Caco-2 (cell line): ENCODE measurements at regions of chr1 and their contacts with region 1.

Region 1: GRCh38 chr1:246689409-246690008 is 34.7 kb upstream of the SCCPDH start:
- DNase-seq: peak; percentile 60 to 73
- H3K4me3 ChIP-seq: 0 out of 2 replicates have a peak overlapping the region, but pooled peaks have one; percentile 14
- H3K4me3 Mint-ChIP-seq: peak overlapping the region; percentile 14
- H3K27ac Mint-ChIP-seq: no peak overlapping the region
- H3K4me1 ChIP-seq: peaks cover 4% of the 10 kb centered on the region; the same call in 1 of the 2 replicates
- H3K4me1 Mint-ChIP-seq: no peaks in the 10 kb centered on the region
- H3K27me3 ChIP-seq: no peaks in the 10 kb centered on the region
- H3K27me3 Mint-ChIP-seq: no peaks in the 10 kb centered on the region
- CTCF ChIP-seq: peak; percentile 84 to 86

Region 2: GRCh38 chr1:246647113-246647512 is 42.4 kb before region 1 on chr1:
- CTCF ChIA-PET with region 1: interaction called, 7 read pairs
- POLR2A ChIA-PET with region 1: no interaction called
- intact Hi-C with region 1: loop called (anchors 5 kb)
- DNase-seq: peak; percentile 41 to 46
- H3K4me3 ChIP-seq: no peak overlapping the region
- H3K4me3 Mint-ChIP-seq: no peak overlapping the region
- H3K27ac Mint-ChIP-seq: no peak overlapping the region
- H3K4me1 ChIP-seq: no peaks in the 10 kb centered on the region
- H3K4me1 Mint-ChIP-seq: no peaks in the 10 kb centered on the region
- H3K27me3 ChIP-seq: no peaks in the 10 kb centered on the region
- H3K27me3 Mint-ChIP-seq: no peaks in the 10 kb centered on the region
- CTCF ChIP-seq: peak; percentile 29 to 52

Region 3: DNA sequence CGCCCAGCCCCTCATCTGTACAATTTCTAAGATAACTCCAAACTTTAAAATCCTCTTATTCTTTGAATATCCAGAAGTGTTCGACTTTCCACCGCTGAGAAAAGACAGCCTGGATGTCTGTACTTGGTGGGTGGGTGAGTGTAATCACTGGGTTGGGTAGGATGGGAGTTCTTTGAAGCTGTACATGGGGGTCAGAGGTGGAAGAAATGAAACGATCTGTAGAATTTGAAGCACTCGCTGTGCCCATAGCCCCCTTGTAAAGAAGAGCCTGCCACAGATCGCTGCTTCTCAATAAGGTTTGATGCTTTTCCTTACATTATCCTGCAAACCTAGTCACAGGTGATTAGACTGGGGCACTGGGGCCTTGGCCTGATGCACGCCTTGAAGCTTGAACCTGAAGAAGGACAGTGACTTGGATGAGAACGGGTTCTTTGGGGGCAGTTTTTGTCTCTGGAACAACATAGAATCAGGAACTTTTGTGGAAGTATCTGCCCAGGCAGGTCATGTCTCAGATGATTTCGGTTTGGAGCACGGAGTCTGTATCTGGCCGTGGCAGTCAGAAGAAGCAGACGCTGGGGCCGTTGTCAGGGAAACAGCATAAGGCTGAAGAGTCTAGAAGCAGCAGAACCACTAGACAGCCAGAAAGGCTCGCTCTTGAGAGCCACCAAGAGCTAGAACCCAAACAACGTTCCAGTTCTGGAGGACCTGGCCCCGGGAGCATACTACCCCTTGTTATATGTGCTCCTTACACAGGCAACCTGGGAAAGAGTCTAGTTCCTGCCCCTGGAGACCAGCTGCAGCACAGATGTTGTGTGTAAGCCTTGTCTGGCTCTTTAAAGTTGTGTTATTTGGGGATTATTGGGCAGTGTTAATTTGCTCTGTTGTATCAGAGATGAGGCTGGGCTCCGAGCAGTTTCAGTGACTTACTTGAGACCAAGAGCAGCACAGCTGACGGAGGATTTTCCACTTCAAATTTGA is 10.4 kb before region 1 on chr1:
- CTCF ChIA-PET with region 1: no interaction called
- POLR2A ChIA-PET with region 1: no interaction called
- intact Hi-C with region 1: no loop called
- DNase-seq: no peak
- H3K4me3 ChIP-seq: no peak overlapping the region
- H3K4me3 Mint-ChIP-seq: no peak overlapping the region
- H3K27ac Mint-ChIP-seq: peak overlapping the region; percentile 1
- H3K4me1 ChIP-seq: peaks cover 11% of the 10 kb centered on the region
- H3K4me1 Mint-ChIP-seq: peaks cover 13% of the 10 kb centered on the region
- H3K27me3 ChIP-seq: no peaks in the 10 kb centered on the region
- H3K27me3 Mint-ChIP-seq: no peaks in the 10 kb centered on the region
- CTCF ChIP-seq: no peak

Region 4: GRCh38 chr1:246753670-246754535 is 64.4 kb after region 1 on chr1:
- CTCF ChIA-PET with region 1: interaction called, 4 read pairs
- POLR2A ChIA-PET with region 1: no interaction called
- intact Hi-C with region 1: loop called (anchors 1 kb)
- DNase-seq: peak; percentile 70 to 83
- H3K4me3 ChIP-seq: no peak overlapping the region
- H3K4me3 Mint-ChIP-seq: no peak overlapping the region
- H3K27ac Mint-ChIP-seq: no peak overlapping the region
- H3K4me1 ChIP-seq: 0 out of 2 replicates have a peak, but pooled peaks cover 3% of the 10 kb centered on the region
- H3K4me1 Mint-ChIP-seq: peaks cover 8% of the 10 kb centered on the region
- H3K27me3 ChIP-seq: no peaks in the 10 kb centered on the region
- H3K27me3 Mint-ChIP-seq: no peaks in the 10 kb centered on the region
- CTCF ChIP-seq: peak; percentile 82 to 85

Region 5: GRCh38 chr1:246794835-246795671 is 105.5 kb after region 1 on chr1:
- CTCF ChIA-PET with region 1: no interaction called
- POLR2A ChIA-PET with region 1: no interaction called
- intact Hi-C with region 1: no loop called
- DNase-seq: no peak
- H3K4me3 ChIP-seq: no peak overlapping the region
- H3K4me3 Mint-ChIP-seq: no peak overlapping the region
- H3K27ac Mint-ChIP-seq: no peak overlapping the region
- H3K4me1 ChIP-seq: no peaks in the 10 kb centered on the region
- H3K4me1 Mint-ChIP-seq: peaks cover 7% of the 10 kb centered on the region
- H3K27me3 ChIP-seq: no peaks in the 10 kb centered on the region
- H3K27me3 Mint-ChIP-seq: no peaks in the 10 kb centered on the region
- CTCF ChIP-seq: no peak

Region 6: DNA sequence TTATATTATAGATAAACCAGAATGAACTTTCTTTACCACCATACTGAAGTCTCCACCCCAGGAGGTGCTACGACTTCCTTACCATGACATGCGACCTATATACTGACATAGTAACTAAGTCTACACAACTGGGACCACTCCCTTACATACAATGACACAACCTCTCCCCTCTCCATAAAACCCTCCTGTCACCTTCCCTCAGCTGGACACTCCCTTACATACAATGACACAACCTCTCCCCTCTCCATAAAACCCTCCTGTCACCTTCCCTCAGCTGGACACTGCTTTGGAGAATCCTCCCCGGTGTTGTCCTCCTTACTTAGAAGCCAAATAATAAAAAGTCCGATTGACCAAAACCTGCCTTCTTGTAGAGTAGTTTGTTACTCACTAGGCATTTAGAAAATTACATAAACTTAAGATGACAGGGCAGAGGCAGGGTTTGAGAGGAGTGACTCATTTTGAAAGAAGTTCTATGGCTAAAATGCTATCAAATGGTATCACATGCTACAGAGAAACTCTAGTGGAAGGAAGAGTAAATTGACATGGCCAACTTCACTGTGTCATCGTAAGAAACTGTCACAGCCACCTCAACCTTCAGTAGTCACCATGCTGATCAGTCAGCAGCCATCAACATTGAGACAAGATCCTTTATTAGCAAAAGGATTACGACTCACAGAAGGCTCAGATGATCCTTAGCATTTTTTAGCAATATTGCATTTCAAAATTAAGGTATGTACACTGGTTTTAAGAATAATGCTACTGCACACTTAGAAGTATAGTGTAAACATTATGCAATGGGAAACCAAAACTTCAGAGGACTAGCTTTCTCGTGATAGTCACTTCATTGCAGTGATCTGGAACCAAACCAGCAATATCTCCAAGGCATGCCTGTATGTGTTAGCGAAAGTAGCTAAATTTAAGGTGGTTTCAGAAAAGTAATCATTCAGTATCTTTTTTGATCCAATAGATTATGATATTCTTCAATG is 185.8 kb after region 1 on chr1:
- CTCF ChIA-PET with region 1: no interaction called
- POLR2A ChIA-PET with region 1: no interaction called
- intact Hi-C with region 1: no loop called
- DNase-seq: peak in 1 of 2 experiments; percentile 5
- H3K4me3 ChIP-seq: no peak overlapping the region
- H3K4me3 Mint-ChIP-seq: no peak overlapping the region
- H3K27ac Mint-ChIP-seq: peak overlapping the region; percentile 33
- H3K4me1 ChIP-seq: peaks cover 11% of the 10 kb centered on the region
- H3K4me1 Mint-ChIP-seq: peaks cover 16% of the 10 kb centered on the region
- H3K27me3 ChIP-seq: no peaks in the 10 kb centered on the region
- H3K27me3 Mint-ChIP-seq: no peaks in the 10 kb centered on the region
- CTCF ChIP-seq: no peak